ENCODE measurements at regions of chr17 and their contacts with region 1.

Region 1: GRCh38 chr17:76000016-76000754 is 470 bp upstream of the CDK3 start:
- H3K4me3 ChIP-seq: no peak overlapping the region
- H3K27ac ChIP-seq: no peak overlapping the region
- H3K4me1 ChIP-seq: no peaks in the 10 kb centered on the region
- CTCF ChIP-seq: peak; percentile 78

Region 2: DNA sequence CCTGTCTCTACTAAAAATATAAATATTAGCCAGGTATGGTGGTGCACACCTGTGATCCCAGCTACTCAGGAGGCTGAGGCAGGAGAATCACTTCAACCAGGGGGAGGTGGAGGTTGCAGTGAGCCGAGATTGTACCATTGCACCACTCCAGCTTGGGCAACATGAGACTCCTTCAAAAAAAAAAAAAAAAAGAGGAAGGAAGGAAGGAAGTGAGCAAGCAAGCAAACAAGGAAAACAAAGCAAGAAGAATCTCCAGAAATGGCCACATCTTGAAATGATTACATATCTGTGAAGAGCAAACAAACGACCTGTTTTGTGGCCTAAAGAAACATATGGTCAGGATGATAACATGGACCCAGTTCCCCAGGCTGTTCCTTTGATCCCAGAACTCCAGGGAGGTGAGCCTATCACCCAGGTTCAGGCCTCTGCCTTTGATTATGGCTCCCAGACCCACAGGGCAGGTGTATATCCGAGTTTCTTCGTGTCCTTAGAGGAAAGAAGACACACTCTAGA is 30.1 kb before region 1 on chr17:
- CTCF ChIA-PET with region 1: interaction called, 15 read pairs
- POLR2A ChIA-PET with region 1: no interaction called
- H3K4me3 ChIP-seq: no peak overlapping the region
- H3K27ac ChIP-seq: peak overlapping the region; percentile 27; the same call in 1 of the 2 replicates
- H3K4me1 ChIP-seq: no peaks in the 10 kb centered on the region
- CTCF ChIP-seq: no peak

Region 3: DNA sequence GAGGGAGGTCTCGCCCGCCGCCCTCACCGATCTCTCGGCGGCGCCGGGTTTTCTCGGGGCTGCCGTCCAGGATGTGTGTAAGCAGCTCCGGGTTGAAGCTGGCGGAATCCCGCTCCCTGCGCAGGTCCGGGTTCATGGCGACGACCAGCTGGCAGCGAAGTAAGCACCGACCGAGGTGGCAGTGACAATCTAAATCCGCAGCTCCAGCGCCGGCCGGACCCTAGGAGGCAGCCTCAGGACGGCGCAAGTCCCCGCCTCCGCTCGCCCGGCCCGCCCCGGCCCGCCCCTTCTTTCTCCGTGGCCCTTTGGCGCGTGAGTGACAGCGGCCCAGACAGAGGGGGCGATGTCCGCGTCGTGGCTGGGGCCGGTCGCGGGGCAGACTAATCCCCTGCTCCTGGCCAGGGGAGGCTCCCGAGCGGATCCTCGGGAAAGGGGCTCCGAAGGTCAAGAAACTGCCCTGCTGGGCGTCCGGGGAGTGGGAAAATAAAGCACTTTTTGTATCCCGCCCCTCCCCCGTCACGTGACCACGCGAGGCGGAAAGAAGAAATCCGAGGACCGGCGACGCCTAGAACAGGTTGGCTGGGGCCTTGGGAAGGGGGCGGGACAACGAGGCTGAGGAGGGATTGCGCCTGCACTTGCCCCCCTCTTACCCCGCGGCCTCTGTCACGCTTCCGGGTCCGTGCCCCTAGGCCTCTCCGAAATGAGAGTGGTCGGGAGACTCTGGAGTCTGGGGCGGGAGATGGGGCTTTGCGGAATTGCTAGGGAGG is 21.1 kb before region 1 on chr17 and contains the starts of genes ACOX1 and TEN1:
- CTCF ChIA-PET with region 1: interaction called, 15 read pairs
- POLR2A ChIA-PET with region 1: interaction called, 10 read pairs
- H3K4me3 ChIP-seq: peak within 1 kb of the TSS; percentile 77
- H3K27ac ChIP-seq: peak within 1 kb of the TSS; percentile 96
- H3K4me1 ChIP-seq: peaks cover 24% of the 10 kb centered on the region
- CTCF ChIP-seq: peak; percentile 83

Region 4: GRCh38 chr17:75987007-75987406 is 13.2 kb before region 1 on chr17:
- CTCF ChIA-PET with region 1: interaction called, 16 read pairs
- POLR2A ChIA-PET with region 1: interaction called, 7 read pairs
- H3K4me3 ChIP-seq: no peak overlapping the region
- H3K27ac ChIP-seq: no peak overlapping the region
- H3K4me1 ChIP-seq: peaks cover 11% of the 10 kb centered on the region
- CTCF ChIP-seq: no peak

Region 5: DNA sequence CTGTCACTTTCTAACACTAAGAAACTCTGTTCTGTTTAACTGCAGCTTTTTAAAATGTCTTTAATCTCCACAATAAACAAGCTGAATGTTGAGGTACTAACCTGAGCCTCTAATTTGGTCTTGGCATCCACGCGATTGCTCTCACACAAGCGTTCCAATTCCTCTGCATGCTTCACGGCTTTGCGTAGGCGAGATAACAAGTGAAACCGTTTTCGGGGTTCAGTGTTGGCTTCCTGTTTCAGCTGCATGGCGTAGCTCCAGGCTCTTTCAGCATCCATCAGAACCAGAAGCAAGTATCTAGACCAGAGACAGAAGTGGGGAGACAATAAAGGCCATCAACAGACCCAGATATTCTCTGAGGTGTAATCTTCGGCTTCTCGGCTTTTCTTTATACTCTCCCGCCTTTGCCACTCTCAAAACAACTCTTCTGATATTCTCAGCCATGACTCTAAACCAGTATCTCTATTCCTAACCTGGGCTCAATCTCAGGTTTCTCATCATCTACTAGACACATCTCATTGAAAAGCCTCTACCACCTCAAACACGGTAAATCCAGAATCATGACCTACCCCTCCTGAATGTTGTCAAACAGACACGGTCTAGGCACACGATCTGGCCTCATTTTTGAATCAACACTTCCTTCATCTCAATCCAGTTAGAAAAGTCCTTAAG is 63.8 kb after region 1 on chr17:
- CTCF ChIA-PET with region 1: interaction called, 14 read pairs
- POLR2A ChIA-PET with region 1: interaction called, 8 read pairs
- H3K4me3 ChIP-seq: no peak overlapping the region
- H3K27ac ChIP-seq: no peak overlapping the region
- H3K4me1 ChIP-seq: no peaks in the 10 kb centered on the region
- CTCF ChIP-seq: no peak

Measured in HEK293 (cell line).